Gastrocnemius medialis (tissue), 4 donors: ENCODE measurements at regions of chr11 and their contacts with region 1.

Region 1: GRCh38 chr11:3947061-3947460 is 91.6 kb downstream of the STIM1 start:
- DNase-seq: peak; percentile 40 to 54
- ATAC-seq: peak; percentile 26 to 56
- H3K4me3 ChIP-seq: peak overlapping the region in 1 of 4 donors; percentile 4
- H3K27ac ChIP-seq: peak overlapping the region; percentile 81 to 92 (median 84)
- H3K4me1 ChIP-seq: peaks cover 91 to 94% of the 10 kb centered on the region in 2 donors
- H3K27me3 ChIP-seq: no peaks in the 10 kb centered on the region
- CTCF ChIP-seq: no peak
- POLR2A ChIP-seq: no peak

Region 2: GRCh38 chr11:3735827-3736226 is 211.2 kb before region 1 on chr11:
- in situ Hi-C with region 1: no loop called
- intact Hi-C with region 1: no loop called
- DNase-seq: no peak
- ATAC-seq: no peak
- H3K4me3 ChIP-seq: no peak overlapping the region
- H3K27ac ChIP-seq: no peak overlapping the region
- H3K4me1 ChIP-seq: peaks cover 0 to 8% of the 10 kb centered on the region in 2 donors
- H3K27me3 ChIP-seq: no peaks in the 10 kb centered on the region
- CTCF ChIP-seq: no peak
- POLR2A ChIP-seq: no peak

Region 3: DNA sequence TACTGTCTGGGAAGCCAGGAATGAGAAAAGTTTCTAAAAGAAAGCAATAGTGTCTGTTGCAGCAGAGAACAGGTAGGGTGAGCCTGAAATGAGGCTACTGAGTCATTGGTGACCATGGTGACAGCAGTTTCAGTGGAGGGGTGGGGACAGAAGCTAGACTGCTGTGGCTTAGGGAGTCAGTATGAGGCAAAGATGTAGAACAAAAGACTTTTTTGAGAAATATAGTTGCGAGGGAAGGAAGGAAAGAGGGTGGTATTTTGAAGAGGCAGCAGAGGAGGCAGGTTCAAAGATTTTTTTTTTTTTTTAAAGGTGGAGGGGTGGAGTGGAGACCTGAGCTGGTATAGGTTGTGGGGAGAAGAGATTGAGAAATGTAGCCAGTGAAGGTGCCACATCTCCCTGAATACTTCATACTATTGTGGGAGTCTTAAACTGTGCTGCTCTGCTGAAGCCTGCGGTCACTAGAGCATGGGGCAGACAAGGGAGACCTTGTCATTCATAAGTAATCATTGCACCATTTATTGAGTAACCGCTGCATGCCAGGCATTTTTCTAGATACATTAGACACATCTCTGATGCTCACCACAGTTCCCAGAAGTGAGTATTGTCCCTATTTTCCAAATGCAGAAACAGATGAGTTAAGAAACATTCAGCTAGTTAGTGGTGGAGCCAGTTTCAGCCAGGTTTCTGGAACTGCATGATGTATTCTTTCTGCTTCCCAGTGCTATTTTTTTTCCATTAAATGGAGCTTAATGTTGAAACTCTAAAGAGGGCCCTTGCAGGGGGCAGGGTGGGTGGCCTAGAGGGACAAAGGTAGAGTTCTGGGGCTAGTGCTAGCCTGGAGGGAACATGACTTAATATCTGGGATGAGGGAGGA is 41.7 kb before region 1 on chr11:
- in situ Hi-C with region 1: no loop called
- intact Hi-C with region 1: loop called (anchors 2 kb)
- DNase-seq: peak; percentile 12 to 43
- ATAC-seq: peak; percentile 53 to 64
- H3K4me3 ChIP-seq: no peak overlapping the region
- H3K27ac ChIP-seq: peak overlapping the region; percentile 71 to 84 (median 78)
- H3K4me1 ChIP-seq: peaks cover 72 to 85% of the 10 kb centered on the region in 2 donors
- H3K27me3 ChIP-seq: no peaks in the 10 kb centered on the region
- CTCF ChIP-seq: no peak
- POLR2A ChIP-seq: no peak

Region 4: DNA sequence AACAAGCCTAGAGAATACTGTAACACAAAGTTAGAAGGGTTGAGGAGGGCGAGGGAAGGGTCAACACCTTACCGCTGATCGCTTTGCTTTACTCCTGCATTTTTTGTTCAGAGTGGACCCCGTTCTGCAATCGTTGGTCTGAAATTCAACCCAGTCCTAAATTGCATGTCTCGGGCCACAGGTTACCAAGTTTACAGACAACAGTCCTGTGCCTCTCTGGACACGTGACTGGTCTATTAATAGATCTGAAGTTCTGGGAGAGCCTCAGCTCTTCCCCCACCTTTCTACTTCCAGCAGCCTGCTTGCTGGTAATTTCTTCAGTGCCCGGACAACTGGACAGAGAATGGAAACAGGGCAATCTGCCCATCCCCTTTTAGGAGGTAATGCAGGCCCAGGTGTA is 17.4 kb before region 1 on chr11:
- in situ Hi-C with region 1: no loop called
- intact Hi-C with region 1: no loop called
- DNase-seq: peak; percentile 70 to 81
- ATAC-seq: peak; percentile 96
- H3K4me3 ChIP-seq: no peak overlapping the region
- H3K27ac ChIP-seq: peak overlapping the region; percentile 81 to 92 (median 87)
- H3K4me1 ChIP-seq: peaks cover 75 to 80% of the 10 kb centered on the region in 2 donors
- H3K27me3 ChIP-seq: no peaks in the 10 kb centered on the region
- CTCF ChIP-seq: no peak
- POLR2A ChIP-seq: peak; percentile 20 to 31

Region 5: DNA sequence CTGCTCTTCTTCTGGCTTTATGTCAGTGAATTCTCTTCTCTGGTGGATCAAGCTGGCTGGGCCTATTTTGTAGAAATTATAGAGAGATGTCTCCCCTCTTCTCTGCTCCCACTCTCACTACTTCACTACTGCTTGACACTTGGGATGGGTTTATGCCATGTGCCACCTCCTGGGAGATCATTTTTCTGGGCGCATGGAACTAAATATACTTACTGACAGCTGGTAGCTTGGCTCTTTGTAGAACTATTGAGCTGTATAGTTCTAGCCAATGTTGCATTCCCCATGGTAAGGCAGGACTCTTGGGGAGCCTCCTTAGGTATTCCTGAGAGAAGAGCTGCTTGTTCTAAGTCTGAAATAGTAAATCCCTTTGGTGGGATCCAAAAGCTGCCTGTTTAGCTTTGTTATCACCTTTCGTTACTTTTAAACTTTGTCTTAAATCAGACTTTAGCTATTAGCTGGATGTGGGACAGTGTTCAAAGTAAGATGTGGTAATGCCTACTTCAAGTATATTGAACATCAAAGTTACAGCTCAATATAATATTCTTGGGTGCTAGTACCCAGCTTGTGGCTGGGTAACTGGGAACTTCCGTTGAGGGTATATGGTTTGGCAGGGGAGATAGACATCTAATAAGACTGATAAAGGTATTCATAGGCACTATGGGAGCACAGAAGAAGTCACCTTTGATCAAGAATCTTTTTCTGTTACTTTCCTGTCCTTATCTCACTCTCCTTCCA is 60.1 kb after region 1 on chr11:
- in situ Hi-C with region 1: no loop called
- intact Hi-C with region 1: no loop called
- DNase-seq: peak in 1 of 2 donors; percentile 61
- ATAC-seq: peak; percentile 97 to 100
- H3K4me3 ChIP-seq: no peak overlapping the region
- H3K27ac ChIP-seq: peak overlapping the region; percentile 64 to 81 (median 76)
- H3K4me1 ChIP-seq: peaks cover 18 to 19% of the 10 kb centered on the region in 2 donors
- H3K27me3 ChIP-seq: no peaks in the 10 kb centered on the region
- CTCF ChIP-seq: no peak
- POLR2A ChIP-seq: no peak

Region 6: DNA sequence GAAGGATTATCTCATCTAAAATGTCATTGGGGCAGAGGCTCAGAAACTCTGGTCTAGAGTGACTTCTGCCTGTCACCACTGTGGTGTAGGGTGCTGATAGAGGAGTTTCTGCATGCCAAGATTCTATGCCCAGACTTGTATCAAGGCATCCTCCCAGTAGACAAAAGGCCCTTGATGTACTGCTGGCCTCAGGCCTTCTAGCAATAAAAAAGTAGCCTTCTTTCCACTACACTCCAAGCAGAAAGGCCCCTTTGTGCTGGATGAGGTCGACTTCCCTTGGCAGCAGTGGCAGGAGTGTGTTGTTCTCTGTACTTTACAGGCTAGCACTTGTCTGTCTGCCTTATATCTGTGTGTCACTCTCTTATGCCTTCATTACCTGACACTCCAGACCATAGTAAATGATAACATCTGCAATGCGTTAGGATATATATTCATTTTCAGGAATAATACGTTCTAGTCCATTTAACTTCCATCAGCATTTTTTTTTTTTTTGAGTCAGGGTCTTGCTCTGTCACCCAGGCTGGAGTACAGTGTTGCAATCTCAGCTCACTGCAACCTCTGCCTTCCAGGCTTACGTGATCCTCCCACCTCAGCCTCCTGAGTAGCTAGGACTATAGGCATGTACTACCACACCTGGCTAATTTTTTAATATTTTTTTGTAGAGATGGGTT is 98.0 kb after region 1 on chr11:
- in situ Hi-C with region 1: no loop called
- intact Hi-C with region 1: loop called (anchors 5 kb)
- DNase-seq: peak in 1 of 2 donors; percentile 36
- ATAC-seq: peak in 1 of 2 donors; percentile 3
- H3K4me3 ChIP-seq: no peak overlapping the region
- H3K27ac ChIP-seq: peak overlapping the region; percentile 78 to 91 (median 88)
- H3K4me1 ChIP-seq: peaks cover 29 to 57% of the 10 kb centered on the region in 2 donors
- H3K27me3 ChIP-seq: no peaks in the 10 kb centered on the region
- CTCF ChIP-seq: no peak
- POLR2A ChIP-seq: no peak